BJ (cell line): ENCODE measurements at regions of chr16 and their contacts with region 1.

Region 1: DNA sequence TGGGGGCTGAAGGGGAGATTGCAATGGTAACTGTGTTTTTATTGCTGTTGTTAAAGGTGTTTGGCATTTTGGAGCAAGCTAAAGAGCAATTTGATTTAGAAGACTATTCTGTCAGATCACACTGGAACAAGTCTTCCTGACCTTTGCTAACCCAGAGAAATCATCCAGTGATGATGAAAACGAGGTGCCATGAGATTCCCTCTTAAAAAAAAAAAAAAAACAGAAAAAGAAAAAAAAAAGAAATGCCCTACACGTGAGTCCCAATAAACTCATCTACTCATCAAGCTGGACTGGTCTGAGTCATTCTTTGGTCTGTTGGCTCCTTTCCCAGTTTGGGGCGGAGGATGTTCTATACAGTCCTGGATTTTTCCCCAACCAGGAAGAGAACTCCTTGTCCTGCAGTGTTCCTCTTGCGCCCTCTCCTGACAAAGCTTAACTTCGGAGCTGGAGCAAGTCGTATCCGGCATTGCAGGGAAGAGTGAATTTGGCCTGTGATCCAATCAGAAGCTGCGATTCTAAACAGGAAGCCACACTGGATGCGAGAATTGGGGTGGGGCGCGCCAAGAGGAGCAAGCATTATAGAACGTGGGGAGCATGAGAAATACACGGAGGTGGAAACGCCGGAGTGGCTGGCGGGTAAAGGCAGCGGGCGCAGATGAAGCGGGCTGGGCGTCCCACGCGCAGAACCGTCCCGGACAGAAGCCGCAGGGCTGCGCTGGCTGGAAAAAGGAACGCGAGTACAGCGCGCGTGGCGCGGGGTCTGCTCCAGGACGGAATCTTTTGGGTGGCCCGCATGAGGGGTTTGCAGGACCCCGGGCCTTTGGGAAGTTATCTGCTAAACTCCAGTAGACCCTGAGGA is 22.4 kb upstream of the CRYM start:
- DNase-seq: peak; percentile 100
- H3K4me3 ChIP-seq: peak overlapping the region; percentile 75
- H3K27me3 ChIP-seq: no peaks in the 10 kb centered on the region
- CTCF ChIP-seq: peak; percentile 92

Region 2: DNA sequence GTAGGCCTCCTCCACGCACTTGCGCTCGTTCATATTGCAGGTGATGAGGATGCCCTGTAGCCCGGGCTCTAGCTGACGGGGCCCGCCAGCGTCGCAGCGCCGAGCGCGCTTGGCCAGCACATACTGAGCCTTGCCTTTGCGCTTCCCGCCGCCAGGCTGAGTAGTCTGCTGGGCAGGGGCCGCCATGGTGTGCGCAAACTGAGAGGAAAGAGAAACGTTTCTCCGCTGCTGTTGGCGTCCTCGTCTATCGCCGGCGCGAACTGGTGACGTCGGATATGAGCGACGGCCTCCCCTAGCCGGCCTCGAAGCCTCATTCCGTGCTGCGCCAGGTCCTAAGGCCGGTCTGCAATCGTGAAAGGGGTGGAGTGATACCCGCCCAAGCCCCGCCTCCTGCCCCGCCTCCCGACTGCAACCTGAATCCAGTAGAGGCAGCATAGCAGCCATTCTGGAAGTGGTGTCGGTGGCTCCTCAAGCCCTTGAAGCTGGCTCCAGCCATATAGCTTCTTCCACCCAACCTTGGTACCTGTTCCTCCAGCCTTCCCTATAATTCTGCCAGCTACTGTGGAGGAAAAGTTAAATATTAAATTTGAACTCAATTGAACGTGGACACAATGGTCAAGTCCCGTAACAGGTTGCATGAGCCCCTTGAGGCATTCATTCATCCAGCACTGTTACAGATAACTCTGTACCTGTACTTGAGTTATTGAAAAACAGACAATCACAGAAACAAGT is 558.8 kb before region 1 on chr16 and contains the start of gene THUMPD1:
- CTCF ChIA-PET with region 1: no interaction called
- POLR2A ChIA-PET with region 1: interaction called, 25 read pairs
- DNase-seq: peak; percentile 68
- H3K4me3 ChIP-seq: peak within 1 kb of the TSS; percentile 100
- H3K27me3 ChIP-seq: no peaks in the 10 kb centered on the region
- CTCF ChIP-seq: peak; percentile 37
- polyA plus RNA-seq, gene THUMPD1: 12.5 and 17.4 TPM in 2 replicates

Region 3: GRCh38 chr16:21158208-21159110 is 142.1 kb before region 1 on chr16 and contains the start of gene LDAF1:
- CTCF ChIA-PET with region 1: interaction called, 39 read pairs
- POLR2A ChIA-PET with region 1: no interaction called
- DNase-seq: no peak
- H3K4me3 ChIP-seq: peak within 1 kb of the TSS; percentile 89
- H3K27me3 ChIP-seq: no peaks in the 10 kb centered on the region
- CTCF ChIP-seq: 0 out of 2 replicates have a peak, but pooled peaks have one; percentile 3
- polyA plus RNA-seq, gene LDAF1: 28.1 and 31.1 TPM in 2 replicates

Region 4: GRCh38 chr16:21277927-21278706 is 22.4 kb before region 1 on chr16 and contains the start of gene CRYM:
- CTCF ChIA-PET with region 1: interaction called, 13 read pairs
- POLR2A ChIA-PET with region 1: no interaction called
- DNase-seq: no peak
- H3K4me3 ChIP-seq: peak within 1 kb of the TSS; percentile 20
- H3K27me3 ChIP-seq: peaks cover 24% of the 10 kb centered on the region
- CTCF ChIP-seq: peak; percentile 90
- polyA plus RNA-seq, gene CRYM: not detected in 2 replicates